Transverse colon (tissue), 4 donors: ENCODE measurements at regions of chr4 and their contacts with region 1.

Region 1: GRCh38 chr4:7067452-7068278 is at the start of gene GRPEL1:
- DNase-seq: peak; percentile 100
- H3K4me3 ChIP-seq: peak within 1 kb of the TSS; percentile 79 to 92 (median 85)
- H3K27ac ChIP-seq: peak within 1 kb of the TSS; percentile 88 to 96 (median 92)
- H3K4me1 ChIP-seq: peaks cover 18 to 32% (median 22%) of the 10 kb centered on the region in 4 donors
- H3K27me3 ChIP-seq: no peaks in the 10 kb centered on the region
- CTCF ChIP-seq: no peak
- EP300 ChIP-seq: no peak
- POLR2A ChIP-seq: peak; percentile 98
- total RNA-seq, gene GRPEL1: 1.1 to 22.0 (median 12.5) TPM

Region 2: GRCh38 chr4:6716018-6716911 is 351.4 kb before region 1 on chr4 and contains the start of gene BLOC1S4:
- in situ Hi-C with region 1: loop called in 3 of 4 experiments (anchors 10 to 25 kb)
- intact Hi-C with region 1: loop called (anchors 5 kb)
- DNase-seq: peak; percentile 90
- H3K4me3 ChIP-seq: peak within 1 kb of the TSS; percentile 69 to 84 (median 74)
- H3K27ac ChIP-seq: peak within 1 kb of the TSS; percentile 92 to 94 (median 93)
- H3K4me1 ChIP-seq: peaks cover 4 to 26% (median 12%) of the 10 kb centered on the region in 4 donors
- H3K27me3 ChIP-seq: no peaks in the 10 kb centered on the region
- CTCF ChIP-seq: peak in 2 of 5 experiments; percentile 10 to 41
- EP300 ChIP-seq: no peak
- POLR2A ChIP-seq: peak; percentile 84
- total RNA-seq, gene BLOC1S4: 1.00 to 18.8 (median 12.4) TPM

Region 3: DNA sequence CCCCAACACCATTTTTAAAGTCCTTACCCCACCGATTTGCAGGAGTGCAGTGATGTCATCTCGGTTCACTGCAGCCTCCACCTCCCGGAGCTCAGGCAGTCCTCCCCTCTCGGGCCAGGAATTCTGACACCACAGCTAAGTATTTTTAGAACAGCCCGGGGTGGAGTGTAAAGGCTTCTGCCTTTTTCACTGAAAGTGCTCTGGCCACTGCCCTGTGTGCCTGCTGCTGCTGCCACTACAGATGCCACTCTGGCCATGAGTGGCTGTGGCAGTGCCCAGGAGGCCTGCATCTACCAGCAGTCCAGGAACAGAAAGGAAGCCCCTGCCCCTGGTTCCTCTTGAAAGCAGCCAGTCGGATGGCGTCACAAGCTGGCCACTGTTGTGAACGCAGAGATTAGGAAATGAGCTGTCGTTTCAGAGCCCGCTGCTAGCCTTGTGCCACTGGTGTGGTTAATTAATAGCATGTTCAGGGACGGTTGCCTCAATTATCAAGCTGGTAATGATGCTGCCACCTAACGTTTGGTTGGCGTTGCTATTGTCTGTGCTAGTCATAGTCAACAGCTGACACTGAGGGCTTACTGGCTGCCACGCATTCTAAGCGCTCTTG is 181.6 kb before region 1 on chr4:
- in situ Hi-C with region 1: loop called in 1 of 4 experiments (anchors 25 kb)
- intact Hi-C with region 1: no loop called
- DNase-seq: no peak
- H3K4me3 ChIP-seq: no peak overlapping the region
- H3K27ac ChIP-seq: peak overlapping the region in 3 of 4 donors; percentile 34 to 55 (median 34)
- H3K4me1 ChIP-seq: peaks cover 0 to 10% (median 7%) of the 10 kb centered on the region in 4 donors
- H3K27me3 ChIP-seq: no peaks in the 10 kb centered on the region
- CTCF ChIP-seq: peak in 1 of 5 experiments; percentile 18
- EP300 ChIP-seq: no peak
- POLR2A ChIP-seq: no peak

Region 4: DNA sequence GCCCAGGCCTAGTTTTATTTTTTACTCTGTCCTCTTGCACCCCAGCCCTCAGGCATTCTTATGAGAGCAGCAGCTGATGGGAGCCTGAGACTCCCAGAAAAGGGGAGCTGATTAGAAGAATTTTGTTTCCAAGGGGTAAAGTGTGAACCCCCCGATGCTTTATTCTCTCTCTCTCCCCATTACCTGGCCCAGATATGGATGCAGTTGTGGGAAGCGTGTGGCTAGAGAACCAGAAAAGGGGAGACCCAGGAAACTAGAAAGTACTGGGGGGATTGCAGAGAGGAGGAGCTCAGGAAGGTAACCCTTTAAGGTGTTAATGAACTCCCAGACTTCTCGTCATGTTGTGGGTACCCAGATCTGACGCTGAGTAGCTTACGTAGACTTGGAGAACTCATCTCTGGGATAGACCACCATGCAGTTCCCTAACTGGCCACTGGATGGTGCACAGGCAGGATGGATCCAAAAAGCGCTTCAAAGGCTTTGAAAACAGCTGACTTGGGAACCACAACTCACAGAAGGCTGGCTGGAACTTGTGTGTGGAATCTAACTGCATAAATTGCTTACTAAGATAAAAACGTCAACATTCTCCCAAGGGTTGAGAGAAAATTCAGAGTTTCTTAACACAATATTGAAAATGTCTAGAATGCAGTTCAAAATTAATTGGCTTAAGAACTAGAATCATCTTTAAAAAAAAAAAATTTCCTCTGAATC is 93.4 kb before region 1 on chr4:
- in situ Hi-C with region 1: no loop called
- intact Hi-C with region 1: no loop called
- DNase-seq: peak; percentile 87
- H3K4me3 ChIP-seq: no peak overlapping the region
- H3K27ac ChIP-seq: no peak overlapping the region
- H3K4me1 ChIP-seq: peaks cover 0 to 23% (median 7%) of the 10 kb centered on the region in 4 donors
- H3K27me3 ChIP-seq: no peaks in the 10 kb centered on the region
- CTCF ChIP-seq: peak; percentile 96 to 98 (median 98)
- EP300 ChIP-seq: no peak
- POLR2A ChIP-seq: no peak

Region 5: GRCh38 chr4:6986781-6987587 is 80.7 kb before region 1 on chr4:
- in situ Hi-C with region 1: no loop called
- intact Hi-C with region 1: loop called (anchors 10 kb)
- DNase-seq: peak; percentile 96
- H3K4me3 ChIP-seq: peak overlapping the region; percentile 54 to 75 (median 63)
- H3K27ac ChIP-seq: peak overlapping the region; percentile 95 to 97 (median 96)
- H3K4me1 ChIP-seq: peaks cover 24 to 64% (median 45%) of the 10 kb centered on the region in 4 donors
- H3K27me3 ChIP-seq: no peaks in the 10 kb centered on the region
- CTCF ChIP-seq: peak in 2 of 5 experiments; percentile 22 to 29
- EP300 ChIP-seq: no peak
- POLR2A ChIP-seq: peak; percentile 86